ENCODE measurements at regions of chr16 and their contacts with region 1.

Region 1: DNA sequence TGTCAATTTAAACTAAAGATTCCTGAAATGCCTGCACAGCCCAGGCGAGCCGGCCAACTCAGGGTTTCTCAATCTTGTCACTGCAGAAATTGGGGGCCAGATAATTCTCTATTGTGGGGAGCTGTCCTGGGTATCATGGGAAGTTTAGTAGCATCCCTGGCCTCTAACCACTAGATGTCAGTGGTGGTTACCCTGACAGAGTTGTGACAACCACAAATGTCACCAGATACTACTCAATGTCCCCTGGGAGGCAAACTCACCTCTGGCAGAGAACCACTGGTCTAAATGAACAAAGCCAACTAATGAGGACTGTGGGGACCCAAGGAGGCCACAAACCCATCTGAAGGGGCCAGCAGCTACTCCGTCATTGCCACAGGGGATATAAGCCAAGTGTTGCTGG is 90.9 kb downstream of the MYH11 start:
- DNase-seq: peak; percentile 33
- H3K4me3 Mint-ChIP-seq: no peak overlapping the region
- H3K27ac Mint-ChIP-seq: no peak overlapping the region
- H3K4me1 Mint-ChIP-seq: peaks cover 4% of the 10 kb centered on the region
- H3K27me3 Mint-ChIP-seq: no peaks in the 10 kb centered on the region

Region 2: GRCh38 chr16:15822957-15823356 is 57.1 kb after region 1 on chr16:
- intact Hi-C with region 1: loop called (anchors 1 kb)
- DNase-seq: no peak
- H3K4me3 Mint-ChIP-seq: no peak overlapping the region
- H3K27ac Mint-ChIP-seq: no peak overlapping the region
- H3K4me1 Mint-ChIP-seq: no peaks in the 10 kb centered on the region
- H3K27me3 Mint-ChIP-seq: peaks cover 2% of the 10 kb centered on the region

Region 3: GRCh38 chr16:16062023-16062932 is 296.4 kb after region 1 on chr16:
- intact Hi-C with region 1: loop called (anchors 5 kb)
- DNase-seq: peak; percentile 36
- H3K4me3 Mint-ChIP-seq: peak overlapping the region; percentile 16
- H3K27ac Mint-ChIP-seq: peak overlapping the region; percentile 31
- H3K4me1 Mint-ChIP-seq: peaks cover 27% of the 10 kb centered on the region
- H3K27me3 Mint-ChIP-seq: no peaks in the 10 kb centered on the region

Region 4: GRCh38 chr16:16191493-16192167 is 425.8 kb after region 1 on chr16:
- intact Hi-C with region 1: loop called (anchors 1 kb)
- DNase-seq: no peak
- H3K4me3 Mint-ChIP-seq: no peak overlapping the region
- H3K27ac Mint-ChIP-seq: no peak overlapping the region
- H3K4me1 Mint-ChIP-seq: no peaks in the 10 kb centered on the region
- H3K27me3 Mint-ChIP-seq: peaks cover 6% of the 10 kb centered on the region

Measured in activated T-helper 1 cell treated with anti-CD3 and anti-CD28 coated beads, Interleukin-12 subunit alpha, Interleukin-12 subunit beta, Interleukin-2, Interleukin-4 antibody, amounts not matched to agents 30 ng/mL and 10 ng/mL and 1 ng/mL, durations not matched to agents 14 hours and 24 hours and 36 hours (primary cell).